ENCODE measurements at regions of chr2 and their contacts with region 1.

Region 1: GRCh38 chr2:113282747-113283533 is 4.2 kb upstream of the PAX8 start:
- DNase-seq: peak; percentile 4
- ATAC-seq: no peak
- H3K4me3 ChIP-seq: no peak overlapping the region
- H3K27ac ChIP-seq: no peak overlapping the region
- H3K4me1 ChIP-seq: peaks cover 19% of the 10 kb centered on the region
- H3K27me3 ChIP-seq: peaks cover 14% of the 10 kb centered on the region
- CTCF ChIP-seq: 0 out of 2 replicates have a peak, but pooled peaks have one; percentile 6
- POLR2A ChIP-seq: no peak
- RAD21 ChIP-seq: no peak

Region 2: GRCh38 chr2:113198790-113199612 is 83.9 kb before region 1 on chr2:
- CTCF ChIA-PET with region 1: no interaction called
- POLR2A ChIA-PET with region 1: no interaction called
- dilution Hi-C with region 1: no loop called
- in situ Hi-C with region 1: no loop called
- intact Hi-C with region 1: no loop called
- DNase-seq: peak; percentile 47
- ATAC-seq: peak; percentile 95
- H3K4me3 ChIP-seq: peak overlapping the region; percentile 78
- H3K27ac ChIP-seq: no peak overlapping the region; the same call in 1 of the 2 replicates
- H3K4me1 ChIP-seq: no peaks in the 10 kb centered on the region
- H3K27me3 ChIP-seq: peaks cover 19% of the 10 kb centered on the region; the same call in 1 of the 2 replicates
- CTCF ChIP-seq: peak; percentile 83
- POLR2A ChIP-seq: no peak
- RAD21 ChIP-seq: peak; percentile 44

Region 3: DNA sequence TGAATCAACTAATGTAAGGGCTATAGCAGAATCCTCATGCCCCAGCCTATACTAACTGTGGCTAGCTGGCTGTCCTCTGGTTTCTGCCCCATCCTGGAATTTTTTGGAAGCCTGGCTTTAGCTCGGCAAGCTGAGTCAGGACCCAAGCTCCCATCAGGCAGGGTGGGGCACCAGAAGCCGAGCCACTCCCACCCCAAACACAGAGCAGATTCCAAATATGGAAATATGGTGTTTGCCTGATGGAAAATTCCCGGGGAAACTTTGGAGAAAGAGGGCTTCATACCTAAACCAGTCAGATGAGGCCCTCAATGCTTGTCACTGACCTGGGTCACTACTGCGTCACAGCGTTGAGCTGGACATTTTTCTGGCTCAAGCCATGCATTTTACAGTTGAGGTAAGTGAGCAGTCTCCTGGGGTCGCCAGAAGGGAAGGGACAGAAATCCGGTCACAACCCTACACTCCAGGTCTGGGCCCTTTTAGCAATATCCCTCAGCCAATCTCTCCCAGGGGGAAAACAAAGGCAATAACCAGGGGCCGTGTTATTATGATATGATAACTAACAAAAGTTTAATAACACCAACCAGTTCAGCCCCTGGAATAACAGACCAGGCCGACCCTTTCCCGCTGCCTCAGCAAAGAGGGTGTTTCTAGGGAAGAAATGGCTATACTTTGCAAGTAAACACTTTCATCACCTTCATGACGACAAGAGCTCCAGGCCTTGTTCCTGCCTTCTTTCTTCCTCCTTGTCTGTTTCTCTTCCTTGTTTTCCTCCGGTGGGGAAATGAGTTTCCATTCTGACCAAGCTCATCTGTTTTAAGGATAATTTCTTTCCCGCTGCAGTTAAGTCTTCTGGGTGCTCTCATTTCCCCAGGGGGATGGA is 71.5 kb before region 1 on chr2:
- CTCF ChIA-PET with region 1: no interaction called
- POLR2A ChIA-PET with region 1: no interaction called
- dilution Hi-C with region 1: no loop called
- in situ Hi-C with region 1: no loop called
- intact Hi-C with region 1: loop called (anchors 2 kb)
- DNase-seq: peak; percentile 49
- ATAC-seq: peak; percentile 73
- H3K4me3 ChIP-seq: no peak overlapping the region
- H3K27ac ChIP-seq: no peak overlapping the region; the same call in 1 of the 2 replicates
- H3K4me1 ChIP-seq: peaks cover 15% of the 10 kb centered on the region
- H3K27me3 ChIP-seq: peaks cover 2% of the 10 kb centered on the region; the same call in 1 of the 2 replicates
- CTCF ChIP-seq: no peak
- POLR2A ChIP-seq: no peak
- RAD21 ChIP-seq: no peak